AG04449 (cell line): ENCODE measurements at regions of chr6 and their contacts with region 1.

Region 1: DNA sequence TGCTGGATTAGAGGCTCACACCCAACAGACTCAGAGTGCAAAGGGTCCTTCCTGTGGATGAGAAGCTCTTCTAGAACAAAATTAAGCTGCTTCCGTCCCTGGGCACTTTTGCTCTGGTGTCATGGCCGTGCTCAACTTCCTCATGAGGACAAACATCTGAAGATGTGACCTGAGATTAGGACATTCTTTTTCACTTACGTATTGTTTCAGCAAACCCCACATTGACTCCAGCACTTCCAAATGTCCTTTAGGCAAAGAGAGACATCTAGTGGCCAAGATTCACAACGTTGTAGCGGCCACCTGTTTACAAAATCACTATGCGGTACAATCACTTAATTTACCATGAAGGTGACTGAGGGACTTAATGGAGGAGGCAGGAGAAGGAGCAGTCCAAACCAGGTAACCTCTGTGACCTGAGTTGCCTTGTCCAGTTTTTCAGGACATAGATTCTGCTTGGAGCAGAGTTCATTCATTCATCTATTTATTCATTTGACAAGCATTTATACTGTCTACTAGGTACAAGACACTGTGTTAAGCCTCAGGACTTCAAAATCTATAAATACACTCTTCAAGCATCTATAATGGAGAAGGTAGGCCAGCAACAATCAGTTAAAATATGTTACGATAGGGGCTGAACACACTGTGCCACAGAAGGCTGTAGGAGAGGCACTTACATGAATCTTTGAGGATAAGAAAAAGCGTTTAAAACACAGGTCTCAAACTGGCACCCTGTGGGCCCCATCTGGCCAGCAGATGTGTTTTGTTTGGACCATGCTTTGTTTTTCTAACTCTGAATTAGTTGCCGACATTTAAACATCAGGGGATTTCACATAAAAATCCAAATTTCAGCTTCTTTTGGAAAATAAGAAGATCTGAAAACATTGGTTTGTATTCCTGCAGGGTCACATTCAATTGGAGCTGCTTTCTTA is 5.6 kb upstream of the ADGRF1 start:
- DNase-seq: no peak
- H3K4me3 ChIP-seq: no peak overlapping the region
- CTCF ChIP-seq: peak; percentile 64

Region 2: GRCh38 chr6:47034919-47035318 is 12.8 kb before region 1 on chr6:
- CTCF ChIA-PET with region 1: interaction called, 35 read pairs
- POLR2A ChIA-PET with region 1: no interaction called
- DNase-seq: no peak
- H3K4me3 ChIP-seq: no peak overlapping the region
- CTCF ChIP-seq: no peak

Region 3: GRCh38 chr6:47066418-47066817 is 18.7 kb after region 1 on chr6:
- CTCF ChIA-PET with region 1: interaction called, 12 read pairs
- POLR2A ChIA-PET with region 1: no interaction called
- DNase-seq: no peak
- H3K4me3 ChIP-seq: no peak overlapping the region
- CTCF ChIP-seq: no peak